Psoas muscle (tissue), 8 donors: ENCODE measurements at regions of chr7 and their contacts with region 1.

Region 1: DNA sequence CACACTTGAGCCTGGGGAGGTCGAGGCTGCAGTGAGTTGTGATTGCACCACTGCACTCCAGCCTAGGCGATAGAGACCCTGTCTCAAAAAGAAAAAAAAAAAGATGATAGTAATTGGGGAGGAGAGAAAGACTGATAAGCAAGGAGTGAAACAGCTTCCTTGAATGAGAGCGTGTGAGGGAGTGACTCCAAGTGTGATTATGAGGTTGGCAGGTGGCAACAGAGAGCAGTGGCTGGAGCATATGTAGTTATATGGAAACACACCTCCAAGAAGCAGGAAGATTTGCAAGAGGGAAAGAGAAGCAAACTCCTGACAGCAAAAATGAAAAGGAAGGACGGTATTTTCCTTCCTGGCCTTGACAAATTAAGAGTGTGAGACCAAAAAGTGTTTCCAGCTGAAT is 50.4 kb downstream of the VKORC1L1 start:
- DNase-seq: no peak
- ATAC-seq: no peak
- H3K4me3 ChIP-seq: no peak overlapping the region
- H3K27ac ChIP-seq: no peak overlapping the region
- H3K4me1 ChIP-seq: peaks cover 9% of the 10 kb centered on the region
- H3K27me3 ChIP-seq: no peaks in the 10 kb centered on the region
- CTCF ChIP-seq: no peak

Region 2: GRCh38 chr7:65809982-65810288 is 113.4 kb before region 1 on chr7:
- intact Hi-C with region 1: loop called in 1 of 2 experiments (anchors 5 kb)
- DNase-seq: no peak
- ATAC-seq: no peak
- H3K4me3 ChIP-seq: no peak overlapping the region
- H3K27ac ChIP-seq: no peak overlapping the region
- H3K4me1 ChIP-seq: no peaks in the 10 kb centered on the region
- H3K27me3 ChIP-seq: no peaks in the 10 kb centered on the region
- CTCF ChIP-seq: no peak

Region 3: GRCh38 chr7:66043681-66044497 is 120.6 kb after region 1 on chr7:
- intact Hi-C with region 1: no loop called
- DNase-seq: peak; percentile 50 to 83
- ATAC-seq: peak; percentile 75 to 96 (median 88)
- H3K4me3 ChIP-seq: peak overlapping the region; percentile 77
- H3K27ac ChIP-seq: peak overlapping the region; percentile 36
- H3K4me1 ChIP-seq: no peaks in the 10 kb centered on the region
- H3K27me3 ChIP-seq: peaks cover 0 to 2% (median 0%) of the 10 kb centered on the region in 3 donors
- CTCF ChIP-seq: no peak